GM12878 (cell line): ENCODE measurements at regions of chr10 and their contacts with region 1.

Region 1: GRCh38 chr10:6473901-6474370 is 106.1 kb downstream of the PRKCQ start:
- DNase-seq: peak; percentile 11
- ATAC-seq: peak; percentile 78
- H3K4me3 ChIP-seq: 0 out of 2 replicates have a peak overlapping the region, but pooled peaks have one; percentile 28
- H3K27ac ChIP-seq: peak overlapping the region; percentile 57
- H3K4me1 ChIP-seq: peaks cover 15% of the 10 kb centered on the region
- H3K27me3 ChIP-seq: no peaks in the 10 kb centered on the region
- CTCF ChIP-seq: no peak
- EP300 ChIP-seq: no peak
- POLR2A ChIP-seq: no peak
- RAD21 ChIP-seq: no peak

Region 2: GRCh38 chr10:5659702-5660528 is 814.0 kb before region 1 on chr10:
- CTCF ChIA-PET with region 1: no interaction called
- POLR2A ChIA-PET with region 1: no interaction called
- RAD21 ChIA-PET with region 1: no interaction called
- SMC1A ChIA-PET with region 1: no interaction called
- in situ Hi-C with region 1: no loop called
- intact Hi-C with region 1: no loop called
- DNase-seq: no peak
- ATAC-seq: peak; percentile 74
- H3K4me3 ChIP-seq: no peak overlapping the region
- H3K27ac ChIP-seq: no peak overlapping the region
- H3K4me1 ChIP-seq: peaks cover 9% of the 10 kb centered on the region
- H3K27me3 ChIP-seq: peaks cover 0 to 1% of the 10 kb centered on the region in 2 experiments; a peak in 2 of 4 replicates
- CTCF ChIP-seq: no peak
- EP300 ChIP-seq: no peak
- POLR2A ChIP-seq: no peak
- RAD21 ChIP-seq: no peak

Region 3: GRCh38 chr10:6445501-6446316 is 28.2 kb before region 1 on chr10:
- CTCF ChIA-PET with region 1: interaction called, 4 read pairs
- POLR2A ChIA-PET with region 1: interaction called, 3 read pairs
- RAD21 ChIA-PET with region 1: interaction called, 8 read pairs
- SMC1A ChIA-PET with region 1: interaction called, 19 read pairs
- in situ Hi-C with region 1: no loop called
- intact Hi-C with region 1: no loop called
- DNase-seq: no peak
- ATAC-seq: peak; percentile 82
- H3K4me3 ChIP-seq: no peak overlapping the region
- H3K27ac ChIP-seq: no peak overlapping the region
- H3K4me1 ChIP-seq: no peaks in the 10 kb centered on the region
- H3K27me3 ChIP-seq: no peaks in the 10 kb centered on the region; a peak in 1 of 4 replicates
- CTCF ChIP-seq: peak; percentile 61 to 82 (median 67)
- EP300 ChIP-seq: no peak
- POLR2A ChIP-seq: no peak
- RAD21 ChIP-seq: peak; percentile 69

Region 4: GRCh38 chr10:6491841-6492609 is 18.1 kb after region 1 on chr10:
- CTCF ChIA-PET with region 1: interaction called, 17 read pairs
- POLR2A ChIA-PET with region 1: interaction called, 6 read pairs
- RAD21 ChIA-PET with region 1: interaction called, 40 read pairs
- SMC1A ChIA-PET with region 1: interaction called, 27 read pairs
- in situ Hi-C with region 1: no loop called
- intact Hi-C with region 1: no loop called
- DNase-seq: no peak
- ATAC-seq: peak; percentile 83
- H3K4me3 ChIP-seq: no peak overlapping the region
- H3K27ac ChIP-seq: no peak overlapping the region
- H3K4me1 ChIP-seq: no peaks in the 10 kb centered on the region
- H3K27me3 ChIP-seq: no peaks in the 10 kb centered on the region; a peak in 2 of 4 replicates
- CTCF ChIP-seq: no peak
- EP300 ChIP-seq: peak; percentile 87 to 96; a peak in 3 of 4 replicates
- POLR2A ChIP-seq: no peak
- RAD21 ChIP-seq: no peak

Region 5: GRCh38 chr10:6498771-6499170 is 24.8 kb after region 1 on chr10:
- CTCF ChIA-PET with region 1: interaction called, 6 read pairs
- POLR2A ChIA-PET with region 1: no interaction called
- RAD21 ChIA-PET with region 1: interaction called, 40 read pairs
- SMC1A ChIA-PET with region 1: interaction called, 25 read pairs
- in situ Hi-C with region 1: no loop called
- intact Hi-C with region 1: no loop called
- DNase-seq: no peak
- ATAC-seq: no peak
- H3K4me3 ChIP-seq: no peak overlapping the region
- H3K27ac ChIP-seq: no peak overlapping the region
- H3K4me1 ChIP-seq: no peaks in the 10 kb centered on the region
- H3K27me3 ChIP-seq: peaks cover 0 to 2% of the 10 kb centered on the region in 2 experiments; a peak in 2 of 4 replicates
- CTCF ChIP-seq: no peak
- EP300 ChIP-seq: no peak
- POLR2A ChIP-seq: no peak
- RAD21 ChIP-seq: no peak

Region 6: DNA sequence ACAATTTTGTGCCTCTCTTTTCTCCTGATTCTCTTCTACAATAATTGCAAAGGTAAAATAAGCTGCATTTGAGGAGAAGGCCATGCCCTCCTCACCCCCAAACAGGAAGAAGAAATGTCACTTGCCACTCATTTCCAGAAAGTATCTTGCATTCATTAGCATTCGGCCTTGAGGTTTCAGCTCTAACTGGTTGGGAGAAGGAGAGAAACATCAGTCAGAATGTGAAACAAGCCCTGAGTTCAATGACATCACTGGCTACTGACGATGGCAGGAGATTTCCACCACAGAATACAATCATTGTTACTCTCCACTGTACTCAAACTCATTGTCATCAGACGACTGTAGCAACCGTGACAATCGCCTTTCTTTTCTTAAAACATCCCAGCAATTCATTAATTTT is 33.4 kb after region 1 on chr10:
- CTCF ChIA-PET with region 1: interaction called, 5 read pairs
- POLR2A ChIA-PET with region 1: no interaction called
- RAD21 ChIA-PET with region 1: interaction called, 13 read pairs
- SMC1A ChIA-PET with region 1: interaction called, 11 read pairs
- in situ Hi-C with region 1: no loop called
- intact Hi-C with region 1: no loop called
- DNase-seq: peak; percentile 26
- ATAC-seq: peak; percentile 90
- H3K4me3 ChIP-seq: no peak overlapping the region
- H3K27ac ChIP-seq: no peak overlapping the region
- H3K4me1 ChIP-seq: no peaks in the 10 kb centered on the region
- H3K27me3 ChIP-seq: no peaks in the 10 kb centered on the region
- CTCF ChIP-seq: no peak
- EP300 ChIP-seq: peak; percentile 52 to 92; a peak in 3 of 4 replicates
- POLR2A ChIP-seq: no peak
- RAD21 ChIP-seq: no peak